Caco-2 (cell line): ENCODE measurements at regions of chr3 and their contacts with region 1.

Region 1: GRCh38 chr3:173993299-173993698 is 595.8 kb downstream of the NLGN1 start:
- DNase-seq: no peak
- H3K4me3 ChIP-seq: no peak overlapping the region
- H3K4me3 Mint-ChIP-seq: no peak overlapping the region
- H3K27ac Mint-ChIP-seq: no peak overlapping the region
- H3K4me1 ChIP-seq: peaks cover 8% of the 10 kb centered on the region
- H3K4me1 Mint-ChIP-seq: no peaks in the 10 kb centered on the region
- H3K27me3 ChIP-seq: no peaks in the 10 kb centered on the region; the same call in 1 of the 2 replicates
- H3K27me3 Mint-ChIP-seq: no peaks in the 10 kb centered on the region
- CTCF ChIP-seq: peak; percentile 30 to 41

Region 2: DNA sequence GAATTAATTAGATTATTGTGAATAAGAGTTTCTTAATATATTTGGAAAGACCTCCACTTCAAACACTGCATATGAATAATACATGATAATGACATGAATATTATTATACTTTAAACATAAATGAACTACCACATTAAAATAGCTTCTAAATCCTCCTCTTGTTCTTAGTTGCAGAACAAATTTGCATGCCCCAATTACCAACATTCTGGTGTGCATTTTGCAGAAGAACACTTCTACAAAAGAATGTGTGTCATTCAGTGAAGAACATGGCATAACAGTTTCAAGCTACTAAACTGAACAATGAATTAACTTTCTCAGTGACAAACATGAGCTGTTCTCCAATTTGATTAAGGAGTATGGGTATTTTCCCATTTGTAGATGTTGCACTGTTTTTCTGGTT is 154.5 kb after region 1 on chr3:
- CTCF ChIA-PET with region 1: no interaction called
- POLR2A ChIA-PET with region 1: no interaction called
- intact Hi-C with region 1: loop called (anchors 1 kb)
- DNase-seq: no peak
- H3K4me3 ChIP-seq: no peak overlapping the region
- H3K4me3 Mint-ChIP-seq: no peak overlapping the region
- H3K27ac Mint-ChIP-seq: no peak overlapping the region
- H3K4me1 ChIP-seq: no peaks in the 10 kb centered on the region
- H3K4me1 Mint-ChIP-seq: no peaks in the 10 kb centered on the region
- H3K27me3 ChIP-seq: no peaks in the 10 kb centered on the region
- H3K27me3 Mint-ChIP-seq: no peaks in the 10 kb centered on the region
- CTCF ChIP-seq: no peak